Panc1 (cell line): ENCODE measurements at regions of chr12 and their contacts with region 1.

Region 1: GRCh38 chr12:120904197-120904773 is at the start of gene SPPL3:
- DNase-seq: no peak
- ATAC-seq: peak; percentile 93
- H3K4me3 ChIP-seq: peak within 1 kb of the TSS; percentile 83 to 91
- H3K27ac ChIP-seq: peak within 1 kb of the TSS; percentile 75
- H3K4me1 ChIP-seq: peaks cover 10% of the 10 kb centered on the region
- H3K27me3 ChIP-seq: no peaks in the 10 kb centered on the region
- CTCF ChIP-seq: no peak; the same call in 1 of the 2 replicates
- total RNA-seq, gene SPPL3: 51.1 TPM

Region 2: DNA sequence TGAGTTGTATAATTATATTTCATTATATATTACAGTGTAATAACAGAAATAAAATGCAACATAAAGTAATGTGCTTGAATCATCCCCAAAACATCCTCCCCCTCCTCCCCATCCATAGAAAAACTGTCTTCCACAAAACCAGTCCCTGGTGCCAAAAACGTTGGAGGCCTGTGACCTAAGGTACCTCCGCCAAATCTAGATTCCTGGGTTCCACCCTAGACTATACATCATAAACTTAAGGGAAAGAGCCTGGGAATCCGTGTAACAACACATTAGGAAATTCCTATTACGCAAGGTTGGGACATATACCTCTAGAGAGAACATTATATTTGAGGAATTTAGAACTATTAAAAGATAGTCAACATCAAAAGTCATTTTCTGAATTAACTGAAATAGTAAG is 38.2 kb before region 1 on chr12:
- CTCF ChIA-PET with region 1: no interaction called
- POLR2A ChIA-PET with region 1: no interaction called
- in situ Hi-C with region 1: no loop called
- intact Hi-C with region 1: no loop called
- DNase-seq: no peak
- ATAC-seq: no peak
- H3K4me3 ChIP-seq: no peak overlapping the region
- H3K27ac ChIP-seq: no peak overlapping the region
- H3K4me1 ChIP-seq: no peaks in the 10 kb centered on the region
- H3K27me3 ChIP-seq: no peaks in the 10 kb centered on the region
- CTCF ChIP-seq: no peak

Region 3: GRCh38 chr12:120886199-120887018 is 17.9 kb before region 1 on chr12:
- CTCF ChIA-PET with region 1: no interaction called
- POLR2A ChIA-PET with region 1: no interaction called
- in situ Hi-C with region 1: no loop called
- intact Hi-C with region 1: no loop called
- DNase-seq: no peak
- ATAC-seq: no peak; the same call in 1 of the 2 replicates
- H3K4me3 ChIP-seq: no peak overlapping the region
- H3K27ac ChIP-seq: no peak overlapping the region
- H3K4me1 ChIP-seq: no peaks in the 10 kb centered on the region
- H3K27me3 ChIP-seq: no peaks in the 10 kb centered on the region
- CTCF ChIP-seq: no peak

Region 4: DNA sequence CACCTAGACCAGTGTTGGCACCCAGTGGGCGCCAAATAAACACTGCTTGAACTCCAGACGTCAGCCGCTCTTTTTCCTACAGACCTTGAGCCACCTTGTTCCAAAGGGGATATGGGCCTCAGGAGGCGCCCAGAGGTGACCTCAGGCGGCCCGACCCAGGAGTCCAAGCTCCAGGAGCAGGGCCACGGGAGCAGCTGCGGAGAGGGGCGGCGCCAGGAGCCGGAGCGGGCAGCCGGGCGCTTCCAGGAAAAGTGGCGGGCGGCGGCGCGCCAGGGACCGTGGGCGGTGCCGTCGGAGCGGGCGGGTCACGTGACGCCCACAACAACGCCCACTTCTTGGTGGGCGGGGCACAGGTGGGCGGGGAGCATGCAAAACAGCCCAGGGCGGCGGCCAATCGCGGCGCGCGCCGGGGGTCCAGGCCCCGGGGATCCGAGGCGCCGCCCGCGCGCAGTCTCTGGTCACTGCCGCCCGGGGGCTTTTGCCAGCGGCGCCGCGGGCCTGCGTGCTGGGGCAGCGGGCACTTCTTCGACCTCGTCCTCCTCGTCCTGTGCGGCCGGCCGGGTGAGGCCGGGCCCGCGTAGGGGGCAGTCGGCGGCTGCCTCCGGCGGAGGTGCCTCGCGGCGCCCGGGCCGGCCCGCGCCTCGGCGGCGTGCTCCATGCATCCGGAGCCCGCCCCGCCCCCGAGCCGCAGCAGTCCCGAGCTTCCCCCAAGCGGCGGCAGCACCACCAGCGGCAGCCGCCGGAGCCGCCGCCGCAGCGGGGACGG is 722.0 kb after region 1 on chr12 and contains the start of gene ORAI1:
- CTCF ChIA-PET with region 1: no interaction called
- POLR2A ChIA-PET with region 1: interaction called, 14 read pairs
- in situ Hi-C with region 1: no loop called
- intact Hi-C with region 1: no loop called
- DNase-seq: no peak
- ATAC-seq: peak; percentile 90
- H3K4me3 ChIP-seq: peak within 1 kb of the TSS; percentile 73 to 94
- H3K27ac ChIP-seq: peak within 1 kb of the TSS; percentile 84
- H3K4me1 ChIP-seq: peaks cover 25% of the 10 kb centered on the region
- H3K27me3 ChIP-seq: no peaks in the 10 kb centered on the region
- CTCF ChIP-seq: no peak
- total RNA-seq, gene ORAI1: 36.7 TPM